ENCODE measurements at regions of chr12 and their contacts with region 1.

Region 1: DNA sequence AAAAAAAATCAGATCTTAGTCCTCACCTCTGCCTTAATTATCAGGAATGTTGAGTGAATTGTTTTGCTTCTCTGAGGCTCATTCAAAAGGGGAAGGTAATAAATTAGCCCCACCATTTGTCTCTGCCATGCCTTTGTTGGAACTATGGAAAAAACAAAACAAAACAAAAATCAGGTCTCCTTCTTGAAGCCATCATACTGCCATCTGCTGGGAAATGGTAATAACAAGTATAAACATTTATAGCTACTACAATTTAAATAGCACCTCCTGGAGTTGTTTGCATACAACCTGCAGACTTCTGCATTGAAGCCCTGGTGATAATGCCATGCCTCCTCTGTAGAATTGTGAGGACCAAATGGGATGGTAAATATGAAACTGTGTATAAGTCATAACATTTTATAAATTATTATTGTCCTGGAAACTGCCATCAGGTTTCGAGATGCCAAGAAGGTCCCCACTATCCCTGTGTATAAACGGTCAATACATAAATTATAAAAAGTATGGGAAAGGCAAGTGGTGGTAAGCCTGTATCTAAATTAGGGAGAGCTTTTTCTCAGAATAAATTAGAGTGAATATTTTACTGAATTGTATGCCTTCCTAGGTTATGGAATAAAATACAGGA is 87.2 kb upstream of the FGD4 start:
- DNase-seq: no peak
- ATAC-seq: no peak
- H3K4me3 Mint-ChIP-seq: no peak overlapping the region
- H3K27ac Mint-ChIP-seq: no peak overlapping the region
- H3K4me1 Mint-ChIP-seq: peaks cover 2% of the 10 kb centered on the region
- H3K27me3 Mint-ChIP-seq: no peaks in the 10 kb centered on the region

Region 2: GRCh38 chr12:32217354-32218310 is 94.5 kb before region 1 on chr12:
- CTCF ChIA-PET with region 1: no interaction called
- POLR2A ChIA-PET with region 1: no interaction called
- intact Hi-C with region 1: no loop called
- DNase-seq: no peak
- ATAC-seq: peak; percentile 69
- H3K4me3 Mint-ChIP-seq: no peak overlapping the region
- H3K27ac Mint-ChIP-seq: no peak overlapping the region
- H3K4me1 Mint-ChIP-seq: peaks cover 5% of the 10 kb centered on the region
- H3K27me3 Mint-ChIP-seq: no peaks in the 10 kb centered on the region

Region 3: DNA sequence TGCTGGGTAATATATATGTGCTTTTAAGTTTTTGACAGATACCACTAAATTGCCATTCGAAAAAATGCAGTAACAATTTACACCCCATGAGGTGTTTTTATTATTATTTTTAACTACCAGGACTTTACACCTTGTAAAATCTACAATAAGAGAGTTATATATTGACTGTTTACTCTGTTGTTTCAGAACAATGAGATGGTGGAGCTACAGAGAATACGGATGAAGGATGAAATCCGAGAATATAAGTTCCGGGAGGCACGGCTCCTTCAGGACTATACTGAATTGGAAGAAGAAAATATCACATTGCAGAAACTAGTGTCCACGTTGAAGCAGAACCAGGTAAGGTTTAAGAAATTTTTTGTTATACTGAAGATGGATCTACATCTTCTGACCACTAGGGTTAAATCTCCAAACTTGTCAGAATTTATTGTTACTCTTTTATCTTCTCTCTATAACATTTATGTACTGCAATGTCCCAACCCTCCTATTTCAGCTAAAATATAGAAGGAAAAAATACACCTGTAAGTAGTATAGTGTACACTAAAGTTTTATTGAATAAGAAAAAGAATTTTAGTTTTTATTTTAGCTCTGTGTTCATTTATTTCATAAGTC is 18.2 kb before region 1 on chr12:
- CTCF ChIA-PET with region 1: interaction called, 10 read pairs
- POLR2A ChIA-PET with region 1: no interaction called
- intact Hi-C with region 1: no loop called
- DNase-seq: no peak
- ATAC-seq: no peak
- H3K4me3 Mint-ChIP-seq: no peak overlapping the region
- H3K27ac Mint-ChIP-seq: no peak overlapping the region
- H3K4me1 Mint-ChIP-seq: no peaks in the 10 kb centered on the region
- H3K27me3 Mint-ChIP-seq: no peaks in the 10 kb centered on the region